AG04449 (cell line): ENCODE measurements at regions of chr2 and their contacts with region 1.

Region 1: GRCh38 chr2:117814417-117815264 is at the start of gene DDX18:
- DNase-seq: peak; percentile 84
- H3K4me3 ChIP-seq: peak within 1 kb of the TSS; percentile 96
- CTCF ChIP-seq: peak; percentile 99

Region 2: GRCh38 chr2:117726747-117727146 is 87.9 kb before region 1 on chr2:
- CTCF ChIA-PET with region 1: no interaction called
- POLR2A ChIA-PET with region 1: no interaction called
- DNase-seq: no peak
- H3K4me3 ChIP-seq: no peak overlapping the region
- CTCF ChIP-seq: no peak

Region 3: DNA sequence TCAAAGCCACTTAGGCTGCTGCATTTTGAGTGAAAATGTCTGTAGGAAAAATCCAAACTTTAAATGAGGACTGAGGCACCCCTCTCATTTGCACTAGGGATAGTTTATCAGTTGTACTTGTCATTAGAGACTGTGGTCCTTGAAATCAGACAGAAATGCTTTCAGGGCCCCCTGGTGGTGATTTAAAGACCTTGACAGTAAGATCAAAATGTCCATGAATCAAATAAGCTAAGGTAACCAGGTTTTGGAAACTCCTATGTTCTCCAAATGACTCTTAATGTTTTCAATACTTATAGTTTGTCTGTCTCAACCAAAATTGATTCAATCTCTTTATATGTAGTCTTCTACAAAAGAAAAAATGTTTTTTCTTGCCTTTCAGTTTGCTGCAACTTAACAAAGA is 28.9 kb before region 1 on chr2:
- CTCF ChIA-PET with region 1: interaction called, 17 read pairs
- POLR2A ChIA-PET with region 1: no interaction called
- DNase-seq: no peak
- H3K4me3 ChIP-seq: no peak overlapping the region
- CTCF ChIP-seq: peak; percentile 53

Region 4: GRCh38 chr2:117801826-117802225 is 12.8 kb before region 1 on chr2:
- CTCF ChIA-PET with region 1: interaction called, 36 read pairs
- POLR2A ChIA-PET with region 1: no interaction called
- DNase-seq: no peak
- H3K4me3 ChIP-seq: no peak overlapping the region
- CTCF ChIP-seq: no peak

Region 5: DNA sequence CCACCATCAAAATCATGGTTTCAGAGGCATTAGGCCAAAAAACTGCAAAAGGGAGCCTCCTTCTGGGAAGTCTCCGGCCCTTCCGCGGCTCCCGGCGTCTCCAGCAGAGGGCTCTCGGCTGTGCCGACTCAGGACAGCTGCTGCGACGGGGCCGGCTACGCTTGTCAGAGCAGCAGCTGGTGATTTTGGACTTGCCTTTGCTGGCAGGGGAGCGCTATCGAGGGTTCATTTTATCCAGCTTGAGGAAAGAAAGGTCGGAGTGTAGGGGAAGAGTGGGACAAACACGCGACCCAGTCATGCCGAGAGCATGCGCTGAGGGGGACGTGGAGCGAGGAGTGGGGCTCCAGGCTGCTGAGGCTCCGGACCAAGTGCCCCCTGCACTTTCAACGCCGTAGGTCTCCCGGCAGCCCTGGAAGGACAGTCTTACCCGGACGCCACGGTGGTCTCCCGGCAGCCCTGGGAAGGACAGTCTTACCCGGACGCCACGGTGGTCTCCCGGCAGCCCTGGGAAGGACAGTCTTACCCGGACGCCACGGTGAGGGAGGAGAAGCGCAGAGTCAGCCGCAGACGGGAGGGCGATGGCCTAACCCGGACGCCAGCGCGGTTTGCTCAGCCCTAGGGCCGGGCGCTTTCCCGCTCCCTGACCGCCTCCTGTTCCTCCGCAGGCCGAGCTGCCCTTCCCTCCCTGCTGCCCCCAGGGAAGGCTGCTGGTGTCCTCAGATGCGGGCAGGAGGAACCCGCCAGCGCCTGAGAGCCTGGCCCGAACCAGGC is 21.5 kb after region 1 on chr2:
- CTCF ChIA-PET with region 1: interaction called, 51 read pairs
- POLR2A ChIA-PET with region 1: no interaction called
- DNase-seq: peak; percentile 29
- H3K4me3 ChIP-seq: peak overlapping the region; percentile 55
- CTCF ChIP-seq: peak; percentile 97

Region 6: GRCh38 chr2:117980783-117981676 is 166.4 kb after region 1 on chr2:
- CTCF ChIA-PET with region 1: interaction called, 11 read pairs
- POLR2A ChIA-PET with region 1: interaction called, 3 read pairs
- DNase-seq: peak; percentile 81
- H3K4me3 ChIP-seq: no peak overlapping the region
- CTCF ChIP-seq: no peak

Region 7: DNA sequence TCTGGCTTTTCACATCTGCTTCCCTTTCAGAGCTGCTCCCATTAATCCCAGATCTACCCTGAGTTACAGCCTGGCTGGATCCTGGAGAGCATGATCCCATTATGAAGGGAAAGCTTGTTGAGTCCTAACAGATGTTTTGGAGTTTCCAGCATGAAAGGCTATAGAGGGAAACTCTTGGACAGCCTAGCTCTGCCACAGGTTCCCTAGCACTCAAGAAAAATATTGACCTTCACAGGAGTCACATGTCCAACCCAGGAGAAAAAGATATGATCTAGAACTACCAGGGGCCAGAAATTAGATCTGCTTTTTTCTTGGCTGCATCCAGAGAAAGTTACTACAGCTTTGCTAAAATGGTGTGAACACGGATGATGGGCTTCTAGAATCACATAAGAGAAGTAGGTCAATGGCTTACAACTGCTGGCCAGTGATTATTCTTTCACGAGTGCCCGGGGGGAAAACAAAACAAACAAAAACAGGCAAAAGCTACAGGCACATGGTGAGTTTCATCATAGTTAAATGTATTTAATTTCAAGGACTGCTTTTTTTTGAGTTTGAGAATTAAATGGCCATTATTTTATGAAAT is 183.3 kb after region 1 on chr2:
- CTCF ChIA-PET with region 1: interaction called, 264 read pairs
- POLR2A ChIA-PET with region 1: interaction called, 3 read pairs
- DNase-seq: no peak
- H3K4me3 ChIP-seq: no peak overlapping the region
- CTCF ChIP-seq: no peak